Transverse colon (tissue), 4 donors: ENCODE measurements at regions of chr11 and their contacts with region 1.

Region 1: DNA sequence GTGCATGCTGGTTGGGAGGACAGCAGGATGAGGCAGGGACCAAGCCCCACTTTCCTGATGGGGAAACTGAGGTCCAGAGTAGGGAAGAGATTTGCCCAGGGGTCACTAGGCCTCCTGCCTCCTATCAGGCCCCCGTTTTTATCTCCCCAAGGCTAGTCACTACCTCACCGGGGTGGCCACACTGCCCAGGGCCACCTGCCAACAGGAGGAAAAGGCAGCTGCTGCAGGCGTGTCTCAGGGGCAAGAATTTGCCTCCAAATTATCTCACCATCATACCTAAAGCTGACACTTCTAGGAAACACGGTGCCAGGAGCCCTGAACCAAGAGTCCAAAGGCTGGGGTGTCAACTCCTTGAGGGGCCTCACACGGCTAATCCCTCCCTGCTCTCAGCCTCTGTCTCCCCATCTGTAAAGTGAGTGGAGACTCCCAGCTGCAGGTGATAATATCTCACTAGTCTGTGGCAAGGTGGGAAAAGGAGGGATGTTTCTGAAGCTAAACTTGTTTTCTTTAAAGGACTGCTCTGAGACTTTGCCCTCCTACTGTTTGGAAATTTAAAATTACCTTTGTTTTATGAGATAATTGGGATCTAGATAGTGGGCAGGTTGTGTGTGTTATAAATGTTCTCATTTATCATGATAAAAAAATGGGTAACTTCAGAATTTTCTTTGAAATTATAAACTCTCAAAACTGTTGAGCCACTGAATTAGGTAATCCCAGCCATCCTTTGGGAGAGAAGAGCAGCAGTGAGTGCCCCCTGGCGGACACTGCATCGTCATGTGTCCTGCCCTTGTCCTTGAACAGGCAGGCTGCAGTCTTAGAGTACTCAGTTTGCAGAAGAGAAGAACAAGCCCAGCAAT is 60.0 kb downstream of the MYO7A start:
- DNase-seq: peak; percentile 88
- H3K4me3 ChIP-seq: no peak overlapping the region
- H3K27ac ChIP-seq: peak overlapping the region; percentile 44 to 65 (median 58)
- H3K4me1 ChIP-seq: peaks cover 4 to 28% (median 16%) of the 10 kb centered on the region in 4 donors
- H3K27me3 ChIP-seq: no peaks in the 10 kb centered on the region
- CTCF ChIP-seq: peak; percentile 83 to 93 (median 87)
- EP300 ChIP-seq: no peak
- POLR2A ChIP-seq: no peak

Region 2: GRCh38 chr11:77121096-77121640 is 66.8 kb before region 1 on chr11:
- in situ Hi-C with region 1: loop called in 1 of 4 experiments (anchors 5 kb)
- intact Hi-C with region 1: loop called (anchors 10 kb)
- DNase-seq: no peak
- H3K4me3 ChIP-seq: no peak overlapping the region
- H3K27ac ChIP-seq: no peak overlapping the region
- H3K4me1 ChIP-seq: peaks cover 0 to under 1% (median 0%) of the 10 kb centered on the region in 4 donors
- H3K27me3 ChIP-seq: no peaks in the 10 kb centered on the region
- CTCF ChIP-seq: no peak
- EP300 ChIP-seq: no peak
- POLR2A ChIP-seq: no peak

Region 3: DNA sequence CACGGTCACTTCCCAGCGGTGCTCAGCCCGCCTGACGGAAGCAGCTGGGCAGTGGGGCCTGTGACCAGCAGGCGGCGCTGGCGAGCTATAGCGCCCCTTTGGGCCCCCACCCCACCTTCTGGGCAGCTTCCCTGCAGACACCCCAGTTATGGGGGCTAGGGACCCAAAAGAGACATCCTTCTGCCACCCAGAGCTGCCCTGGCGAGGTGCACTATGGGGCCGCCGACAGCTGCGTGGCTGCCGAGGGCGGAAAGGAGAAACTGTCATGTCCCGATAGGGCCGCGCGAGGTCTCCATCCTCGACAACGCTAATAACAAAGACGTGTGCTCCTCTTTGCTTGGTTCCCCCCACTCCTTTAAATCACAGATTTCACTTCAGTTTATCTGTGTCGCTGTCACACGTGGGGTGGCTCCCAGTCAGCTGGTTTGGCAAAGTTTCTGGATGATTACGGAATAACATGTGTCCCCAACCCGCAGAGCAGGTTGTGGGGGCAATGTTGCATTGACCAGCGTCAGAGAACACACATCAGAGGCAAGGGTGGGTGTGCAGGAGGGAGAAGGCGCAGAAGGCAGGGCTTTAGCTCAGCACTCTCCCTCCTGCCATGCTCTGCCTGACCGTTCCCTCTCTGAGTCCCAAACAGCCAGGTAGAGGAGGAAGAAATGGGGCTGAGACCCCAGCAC is 60.6 kb before region 1 on chr11:
- in situ Hi-C with region 1: loop called in 2 of 4 experiments (anchors 5 to 10 kb)
- intact Hi-C with region 1: loop called (anchors 10 kb)
- DNase-seq: peak; percentile 68
- H3K4me3 ChIP-seq: peak overlapping the region; percentile 2 to 47 (median 18)
- H3K27ac ChIP-seq: peak overlapping the region in 2 of 4 donors; percentile 2 to 8
- H3K4me1 ChIP-seq: peaks cover 9 to 28% (median 15%) of the 10 kb centered on the region in 4 donors
- H3K27me3 ChIP-seq: no peaks in the 10 kb centered on the region
- CTCF ChIP-seq: peak; percentile 99 to 100 (median 99)
- EP300 ChIP-seq: no peak
- POLR2A ChIP-seq: peak; percentile 3

Region 4: GRCh38 chr11:77547863-77548551 is 360.0 kb after region 1 on chr11:
- in situ Hi-C with region 1: loop called (anchors 5 to 25 kb)
- intact Hi-C with region 1: loop called (anchors 10 kb)
- DNase-seq: peak; percentile 30
- H3K4me3 ChIP-seq: no peak overlapping the region
- H3K27ac ChIP-seq: no peak overlapping the region
- H3K4me1 ChIP-seq: peaks cover 0 to 12% (median 3%) of the 10 kb centered on the region in 4 donors
- H3K27me3 ChIP-seq: no peaks in the 10 kb centered on the region
- CTCF ChIP-seq: peak; percentile 57 to 76 (median 72)
- EP300 ChIP-seq: no peak
- POLR2A ChIP-seq: no peak

Region 5: GRCh38 chr11:77557554-77557953 is 369.6 kb after region 1 on chr11:
- in situ Hi-C with region 1: loop called in 1 of 4 experiments (anchors 10 kb)
- intact Hi-C with region 1: no loop called
- DNase-seq: no peak
- H3K4me3 ChIP-seq: no peak overlapping the region
- H3K27ac ChIP-seq: no peak overlapping the region
- H3K4me1 ChIP-seq: no peaks in the 10 kb centered on the region
- H3K27me3 ChIP-seq: no peaks in the 10 kb centered on the region
- CTCF ChIP-seq: peak in 2 of 5 experiments; percentile 10 to 16
- EP300 ChIP-seq: no peak
- POLR2A ChIP-seq: no peak